ENCODE measurements at regions of chr9 and their contacts with region 1.

Region 1: DNA sequence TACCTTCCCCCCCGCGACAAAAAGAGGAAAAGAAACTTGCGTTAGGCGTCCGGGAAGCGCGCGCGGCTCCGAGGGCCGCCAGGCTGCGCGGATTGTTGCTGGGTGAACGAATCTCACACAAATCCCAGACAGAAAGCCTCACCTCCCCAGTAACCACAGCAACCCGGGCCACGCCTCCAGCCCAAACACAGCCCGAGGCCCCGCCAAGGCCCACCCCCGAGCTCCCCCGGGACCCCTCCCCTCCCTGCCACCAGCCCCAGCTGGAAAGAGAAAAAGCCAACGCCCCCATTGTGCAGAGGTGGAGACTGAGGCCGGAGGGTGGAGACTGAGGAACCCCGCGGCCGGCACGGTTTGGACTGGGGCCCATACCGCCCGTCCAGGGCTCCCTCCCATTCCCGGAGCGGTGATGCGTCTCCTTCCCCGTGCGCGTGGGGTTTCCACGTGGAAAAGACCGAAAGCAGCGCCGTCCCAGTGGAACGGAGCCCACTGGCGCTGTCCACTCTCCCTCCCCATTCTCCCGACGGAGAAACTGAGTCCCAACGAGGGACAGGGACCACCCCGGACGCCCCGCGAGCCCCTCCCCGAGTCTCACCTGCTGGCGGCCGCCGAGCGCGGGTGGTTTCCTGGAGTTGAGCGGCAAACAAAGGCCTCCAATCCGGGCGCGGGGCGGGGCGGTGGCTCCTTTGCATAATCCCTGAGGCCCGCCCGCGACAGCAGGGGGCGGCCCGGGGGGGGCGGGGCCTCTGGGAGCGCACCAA is 10.2 kb upstream of the AKNA start:
- DNase-seq: peak; percentile 90 to 92 (median 92)
- H3K4me3 ChIP-seq: peak overlapping the region; percentile 88 to 96 (median 92)
- H3K4me3 Mint-ChIP-seq: peak overlapping the region; percentile 87 to 97
- H3K27ac ChIP-seq: peak overlapping the region; percentile 96 to 99
- H3K27ac Mint-ChIP-seq: peak overlapping the region; percentile 92 to 97 (median 95)
- H3K4me1 ChIP-seq: peaks cover 42 to 48% of the 10 kb centered on the region in 2 donors
- H3K4me1 Mint-ChIP-seq: peaks cover 42% of the 10 kb centered on the region
- H3K27me3 ChIP-seq: no peaks in the 10 kb centered on the region
- H3K27me3 Mint-ChIP-seq: peaks cover 0 to 3% (median 0%) of the 10 kb centered on the region in 3 donors
- CTCF ChIP-seq: no peak

Region 2: DNA sequence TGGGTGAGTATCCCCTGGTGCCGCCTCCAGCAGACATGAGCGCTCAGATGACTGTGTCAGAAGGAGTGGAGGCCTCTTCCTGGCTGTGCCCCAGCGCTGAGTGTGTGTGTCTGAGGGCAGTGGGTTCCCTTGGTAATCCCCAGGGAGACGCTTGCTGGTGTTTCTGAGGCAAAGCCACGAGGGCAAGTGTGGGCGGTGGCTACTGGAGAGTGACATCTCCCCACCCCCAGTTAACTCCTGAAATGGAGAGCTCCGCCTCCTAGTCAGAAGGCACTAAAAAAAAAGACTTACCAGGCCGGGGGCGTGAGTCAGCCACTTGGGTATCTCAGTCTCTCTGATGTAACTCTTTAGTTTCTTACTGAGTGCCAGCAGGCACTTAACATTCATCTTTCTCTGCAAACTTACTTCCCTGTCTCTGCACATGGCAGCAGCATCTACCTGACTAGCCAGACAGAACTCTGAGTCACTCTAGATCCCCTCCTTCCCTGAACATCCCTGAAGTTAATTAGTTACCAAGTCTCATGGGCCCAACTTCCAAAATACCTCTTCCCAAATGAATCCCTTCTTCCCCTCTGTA is 49.0 kb before region 1 on chr9:
- intact Hi-C with region 1: loop called in 1 of 2 experiments (anchors 10 kb)
- DNase-seq: peak; percentile 50 to 71 (median 64)
- H3K4me3 ChIP-seq: no peak overlapping the region
- H3K4me3 Mint-ChIP-seq: no peak overlapping the region
- H3K27ac ChIP-seq: peak overlapping the region in 1 of 2 donors; percentile 69
- H3K27ac Mint-ChIP-seq: peak overlapping the region; percentile 72 to 91 (median 85)
- H3K4me1 ChIP-seq: no peaks in the 10 kb centered on the region
- H3K4me1 Mint-ChIP-seq: peaks cover 17% of the 10 kb centered on the region
- H3K27me3 ChIP-seq: no peaks in the 10 kb centered on the region
- H3K27me3 Mint-ChIP-seq: peaks cover 0 to 2% (median 0%) of the 10 kb centered on the region in 3 donors
- CTCF ChIP-seq: no peak

Region 3: GRCh38 chr9:114364134-114365041 is 33.6 kb before region 1 on chr9:
- intact Hi-C with region 1: loop called in 1 of 2 experiments (anchors 5 kb)
- DNase-seq: peak; percentile 66 to 86 (median 85)
- H3K4me3 ChIP-seq: peak overlapping the region in 1 of 3 experiments; percentile 58
- H3K4me3 Mint-ChIP-seq: peak overlapping the region; percentile 45 to 64
- H3K27ac ChIP-seq: peak overlapping the region; percentile 89 to 96
- H3K27ac Mint-ChIP-seq: peak overlapping the region; percentile 97 to 99 (median 98)
- H3K4me1 ChIP-seq: peaks cover 60 to 62% of the 10 kb centered on the region in 2 donors
- H3K4me1 Mint-ChIP-seq: peaks cover 61% of the 10 kb centered on the region
- H3K27me3 ChIP-seq: no peaks in the 10 kb centered on the region
- H3K27me3 Mint-ChIP-seq: no peaks in the 10 kb centered on the region
- CTCF ChIP-seq: no peak

Region 4: GRCh38 chr9:114385412-114386181 is 12.4 kb before region 1 on chr9:
- intact Hi-C with region 1: loop called (anchors 1 to 2 kb)
- DNase-seq: peak; percentile 92 to 98 (median 97)
- H3K4me3 ChIP-seq: peak overlapping the region; percentile 68 to 89 (median 88)
- H3K4me3 Mint-ChIP-seq: peak overlapping the region; percentile 97 to 98
- H3K27ac ChIP-seq: peak overlapping the region; percentile 98 to 100
- H3K27ac Mint-ChIP-seq: peak overlapping the region; percentile 96 to 100 (median 99)
- H3K4me1 ChIP-seq: peaks cover 79 to 86% of the 10 kb centered on the region in 2 donors
- H3K4me1 Mint-ChIP-seq: peaks cover 74% of the 10 kb centered on the region
- H3K27me3 ChIP-seq: no peaks in the 10 kb centered on the region
- H3K27me3 Mint-ChIP-seq: no peaks in the 10 kb centered on the region
- CTCF ChIP-seq: no peak